ENCODE measurements at regions of chr1 and their contacts with region 1.

Region 1: DNA sequence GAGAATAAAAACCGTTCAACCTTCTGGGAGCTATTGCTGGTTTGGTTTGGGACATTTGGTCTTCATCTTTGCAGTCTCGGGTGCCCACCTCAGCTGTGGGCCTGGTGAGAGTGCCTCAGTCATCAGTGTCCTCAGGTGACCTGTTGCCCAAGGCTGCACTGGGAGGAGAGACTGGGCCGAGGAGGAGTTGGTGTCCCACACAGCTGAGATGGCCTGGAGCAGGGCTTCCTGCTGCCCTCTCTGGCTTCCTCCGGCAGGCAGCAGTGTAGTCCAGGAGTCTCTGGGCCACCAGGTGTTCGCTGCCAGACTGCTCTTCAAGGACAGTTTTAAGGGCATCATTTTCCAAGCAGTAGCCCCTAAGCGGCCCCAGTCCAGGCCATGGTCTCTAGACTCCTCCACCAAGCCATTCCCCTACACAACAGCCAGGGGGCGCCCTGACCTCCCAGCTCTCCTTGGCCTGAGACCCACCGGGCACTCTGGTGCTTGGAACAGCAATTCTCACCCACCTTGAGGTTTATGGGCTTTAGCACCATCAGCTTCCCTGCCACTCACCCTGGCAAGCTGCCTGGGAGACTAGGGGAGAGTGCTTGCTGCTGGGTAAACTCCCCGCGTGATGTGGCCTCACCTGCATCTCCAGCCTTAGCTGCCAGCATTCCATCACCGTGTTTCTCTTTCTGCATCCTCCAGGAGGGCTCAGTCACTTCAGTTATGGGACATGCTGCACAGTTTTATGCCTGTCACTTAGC is 9.1 kb upstream of the SYTL1 start:
- DNase-seq: peak; percentile 12
- H3K4me3 ChIP-seq: no peak overlapping the region
- H3K27ac ChIP-seq: no peak overlapping the region
- H3K4me1 ChIP-seq: no peaks in the 10 kb centered on the region
- H3K27me3 ChIP-seq: no peaks in the 10 kb centered on the region
- CTCF ChIP-seq: peak; percentile 84 to 91
- POLR2A ChIP-seq: no peak

Region 2: GRCh38 chr1:27257155-27257554 is 75.6 kb before region 1 on chr1:
- CTCF ChIA-PET with region 1: no interaction called
- POLR2A ChIA-PET with region 1: no interaction called
- dilution Hi-C with region 1: no loop called
- intact Hi-C with region 1: no loop called
- DNase-seq: no peak
- H3K4me3 ChIP-seq: no peak overlapping the region
- H3K27ac ChIP-seq: no peak overlapping the region
- H3K4me1 ChIP-seq: no peaks in the 10 kb centered on the region
- H3K27me3 ChIP-seq: no peaks in the 10 kb centered on the region
- CTCF ChIP-seq: no peak
- POLR2A ChIP-seq: no peak

Region 3: GRCh38 chr1:27275696-27276095 is 57.0 kb before region 1 on chr1:
- CTCF ChIA-PET with region 1: no interaction called
- POLR2A ChIA-PET with region 1: no interaction called
- dilution Hi-C with region 1: no loop called
- intact Hi-C with region 1: no loop called
- DNase-seq: no peak
- H3K4me3 ChIP-seq: no peak overlapping the region
- H3K27ac ChIP-seq: no peak overlapping the region
- H3K4me1 ChIP-seq: no peaks in the 10 kb centered on the region
- H3K27me3 ChIP-seq: no peaks in the 10 kb centered on the region
- CTCF ChIP-seq: no peak
- POLR2A ChIP-seq: no peak

Region 4: DNA sequence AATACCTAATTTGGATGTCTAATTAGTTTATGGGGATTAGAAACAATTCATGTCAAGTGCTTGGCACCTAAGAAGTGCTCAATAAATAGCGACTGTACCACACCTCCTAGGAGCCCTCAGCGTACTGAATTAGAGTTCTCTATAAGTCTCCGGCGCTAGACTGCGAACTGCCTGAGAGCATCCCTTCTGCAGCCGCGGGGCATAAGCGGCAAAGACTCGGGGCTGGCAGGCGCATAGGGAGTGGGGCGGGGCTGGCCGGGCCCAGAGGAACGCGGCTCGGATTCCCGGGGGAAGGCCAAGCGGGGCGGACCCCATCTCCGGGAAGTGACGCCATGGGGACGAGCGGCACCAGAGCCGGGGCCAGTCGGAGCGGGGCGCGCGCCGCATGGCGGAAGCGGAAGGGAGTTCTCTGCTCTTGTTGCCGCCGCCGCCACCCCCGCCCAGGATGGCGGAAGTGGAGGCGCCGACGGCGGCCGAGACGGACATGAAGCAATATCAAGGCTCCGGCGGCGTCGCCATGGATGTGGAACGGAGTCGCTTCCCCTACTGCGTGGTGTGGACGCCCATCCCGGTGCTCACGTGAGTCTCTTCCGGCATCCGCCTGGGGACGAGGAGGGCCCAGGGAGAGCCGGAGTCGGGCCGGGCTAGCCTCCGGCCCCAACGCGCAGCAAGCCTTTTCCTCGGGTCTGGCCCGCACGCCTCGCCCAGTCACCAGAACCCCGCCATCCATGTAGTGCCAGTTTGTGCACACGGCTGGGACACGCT is 10.7 kb before region 1 on chr1 and contains the start of gene TMEM222:
- CTCF ChIA-PET with region 1: interaction called, 20 read pairs
- POLR2A ChIA-PET with region 1: no interaction called
- dilution Hi-C with region 1: no loop called
- intact Hi-C with region 1: loop called (anchors 1 kb)
- DNase-seq: peak; percentile 97
- H3K4me3 ChIP-seq: peak within 1 kb of the TSS; percentile 47 to 82 (median 68)
- H3K27ac ChIP-seq: peak within 1 kb of the TSS; percentile 77
- H3K4me1 ChIP-seq: peaks cover 11% of the 10 kb centered on the region
- H3K27me3 ChIP-seq: no peaks in the 10 kb centered on the region
- CTCF ChIP-seq: no peak
- POLR2A ChIP-seq: peak; percentile 94
- total RNA-seq, gene TMEM222: 43.1 and 45.8 TPM in 2 replicates

Region 5: GRCh38 chr1:27349784-27350662 is 17.3 kb after region 1 on chr1:
- CTCF ChIA-PET with region 1: interaction called, 12 read pairs
- POLR2A ChIA-PET with region 1: no interaction called
- dilution Hi-C with region 1: no loop called
- intact Hi-C with region 1: no loop called
- DNase-seq: peak; percentile 69
- H3K4me3 ChIP-seq: peak overlapping the region in 1 of 3 experiments; percentile 31
- H3K27ac ChIP-seq: no peak overlapping the region
- H3K4me1 ChIP-seq: peaks cover 7% of the 10 kb centered on the region
- H3K27me3 ChIP-seq: peaks cover 2 to 5% of the 10 kb centered on the region in 2 experiments
- CTCF ChIP-seq: no peak
- POLR2A ChIP-seq: no peak

Region 6: GRCh38 chr1:27357281-27358037 is 24.8 kb after region 1 on chr1:
- CTCF ChIA-PET with region 1: interaction called, 11 read pairs
- POLR2A ChIA-PET with region 1: no interaction called
- dilution Hi-C with region 1: no loop called
- intact Hi-C with region 1: no loop called
- DNase-seq: peak; percentile 57
- H3K4me3 ChIP-seq: no peak overlapping the region
- H3K27ac ChIP-seq: no peak overlapping the region
- H3K4me1 ChIP-seq: no peaks in the 10 kb centered on the region
- H3K27me3 ChIP-seq: no peaks in the 10 kb centered on the region
- CTCF ChIP-seq: peak; percentile 90 to 99
- POLR2A ChIP-seq: no peak

Region 7: GRCh38 chr1:27365372-27366112 is 32.8 kb after region 1 on chr1:
- CTCF ChIA-PET with region 1: interaction called, 57 read pairs
- POLR2A ChIA-PET with region 1: no interaction called
- dilution Hi-C with region 1: no loop called
- intact Hi-C with region 1: no loop called
- DNase-seq: peak; percentile 91
- H3K4me3 ChIP-seq: peak overlapping the region; percentile 62 to 81 (median 79)
- H3K27ac ChIP-seq: peak overlapping the region; percentile 85
- H3K4me1 ChIP-seq: peaks cover 15% of the 10 kb centered on the region
- H3K27me3 ChIP-seq: no peaks in the 10 kb centered on the region
- CTCF ChIP-seq: no peak
- POLR2A ChIP-seq: peak; percentile 41

Measured in endothelial cell of umbilical vein (primary cell).